ENCODE measurements at regions of chr17 and their contacts with region 1.

Region 1: GRCh38 chr17:77451245-77451893 is 310.6 kb downstream of the SEC14L1 start:
- DNase-seq: no peak
- H3K4me3 Mint-ChIP-seq: peak overlapping the region; percentile 64
- H3K27ac Mint-ChIP-seq: peak overlapping the region; percentile 75
- H3K4me1 Mint-ChIP-seq: peaks cover 55% of the 10 kb centered on the region
- H3K27me3 Mint-ChIP-seq: no peaks in the 10 kb centered on the region
- CTCF ChIP-seq: no peak

Region 2: GRCh38 chr17:77462553-77463497 is 11.5 kb after region 1 on chr17:
- CTCF ChIA-PET with region 1: no interaction called
- POLR2A ChIA-PET with region 1: interaction called, 4 read pairs
- intact Hi-C with region 1: loop called (anchors 1 kb)
- DNase-seq: no peak
- H3K4me3 Mint-ChIP-seq: no peak overlapping the region
- H3K27ac Mint-ChIP-seq: no peak overlapping the region
- H3K4me1 Mint-ChIP-seq: no peaks in the 10 kb centered on the region
- H3K27me3 Mint-ChIP-seq: no peaks in the 10 kb centered on the region
- CTCF ChIP-seq: no peak

Region 3: DNA sequence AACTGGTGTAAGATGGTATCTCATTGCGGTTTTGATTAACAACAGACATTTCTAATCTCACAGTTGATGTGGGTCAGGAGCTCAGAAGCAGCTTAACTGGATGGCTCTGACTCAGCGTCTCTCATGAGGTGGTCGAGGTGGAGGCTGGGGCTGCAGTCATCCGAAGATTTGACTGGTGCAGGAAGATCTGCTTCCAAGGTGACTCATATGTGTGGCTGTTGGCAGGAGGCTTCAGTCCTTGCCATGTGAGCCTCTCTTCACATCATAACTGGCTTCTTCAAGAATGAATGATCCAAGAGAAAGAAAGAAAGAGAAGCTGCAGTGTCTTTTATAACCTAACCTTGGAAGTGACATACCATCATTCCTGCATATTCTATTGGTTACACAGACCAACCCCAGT is 65.5 kb after region 1 on chr17:
- CTCF ChIA-PET with region 1: no interaction called
- POLR2A ChIA-PET with region 1: no interaction called
- intact Hi-C with region 1: no loop called
- DNase-seq: peak; percentile 36
- H3K4me3 Mint-ChIP-seq: no peak overlapping the region
- H3K27ac Mint-ChIP-seq: no peak overlapping the region
- H3K4me1 Mint-ChIP-seq: no peaks in the 10 kb centered on the region
- H3K27me3 Mint-ChIP-seq: no peaks in the 10 kb centered on the region
- CTCF ChIP-seq: no peak